ENCODE measurements at regions of chr1 and their contacts with region 1.

Region 1: DNA sequence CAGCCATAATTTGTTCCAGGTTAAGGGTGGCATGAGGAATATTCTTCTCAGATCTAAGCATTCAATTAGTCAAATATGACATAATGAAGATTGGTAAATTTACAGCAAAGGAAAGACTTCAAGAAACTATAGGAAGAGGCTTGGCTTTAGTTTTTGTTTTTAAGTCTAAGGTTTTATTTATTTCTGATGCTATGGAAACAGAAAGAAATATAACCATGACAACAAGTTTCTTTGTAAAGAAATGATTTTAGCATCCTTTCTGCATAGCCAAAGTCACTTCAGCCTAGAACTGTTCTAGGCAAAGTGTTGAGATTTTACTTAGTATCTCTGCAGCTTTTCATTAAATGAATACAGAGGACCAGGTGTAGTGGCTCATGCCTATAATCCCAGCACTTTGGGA is 27.7 kb downstream of the PEA15 start:
- DNase-seq: no peak
- H3K4me3 ChIP-seq: no peak overlapping the region
- CTCF ChIP-seq: no peak

Region 2: GRCh38 chr1:160244209-160244608 is 11.3 kb after region 1 on chr1:
- CTCF ChIA-PET with region 1: interaction called, 98 read pairs
- POLR2A ChIA-PET with region 1: no interaction called
- DNase-seq: no peak
- H3K4me3 ChIP-seq: no peak overlapping the region
- CTCF ChIP-seq: no peak

Region 3: GRCh38 chr1:160446945-160447600 is 214.2 kb after region 1 on chr1:
- CTCF ChIA-PET with region 1: no interaction called
- POLR2A ChIA-PET with region 1: no interaction called
- DNase-seq: no peak
- H3K4me3 ChIP-seq: no peak overlapping the region
- CTCF ChIP-seq: no peak